Spleen (tissue), 13 donors: ENCODE measurements at regions of chr19 and their contacts with region 1.

Region 1: DNA sequence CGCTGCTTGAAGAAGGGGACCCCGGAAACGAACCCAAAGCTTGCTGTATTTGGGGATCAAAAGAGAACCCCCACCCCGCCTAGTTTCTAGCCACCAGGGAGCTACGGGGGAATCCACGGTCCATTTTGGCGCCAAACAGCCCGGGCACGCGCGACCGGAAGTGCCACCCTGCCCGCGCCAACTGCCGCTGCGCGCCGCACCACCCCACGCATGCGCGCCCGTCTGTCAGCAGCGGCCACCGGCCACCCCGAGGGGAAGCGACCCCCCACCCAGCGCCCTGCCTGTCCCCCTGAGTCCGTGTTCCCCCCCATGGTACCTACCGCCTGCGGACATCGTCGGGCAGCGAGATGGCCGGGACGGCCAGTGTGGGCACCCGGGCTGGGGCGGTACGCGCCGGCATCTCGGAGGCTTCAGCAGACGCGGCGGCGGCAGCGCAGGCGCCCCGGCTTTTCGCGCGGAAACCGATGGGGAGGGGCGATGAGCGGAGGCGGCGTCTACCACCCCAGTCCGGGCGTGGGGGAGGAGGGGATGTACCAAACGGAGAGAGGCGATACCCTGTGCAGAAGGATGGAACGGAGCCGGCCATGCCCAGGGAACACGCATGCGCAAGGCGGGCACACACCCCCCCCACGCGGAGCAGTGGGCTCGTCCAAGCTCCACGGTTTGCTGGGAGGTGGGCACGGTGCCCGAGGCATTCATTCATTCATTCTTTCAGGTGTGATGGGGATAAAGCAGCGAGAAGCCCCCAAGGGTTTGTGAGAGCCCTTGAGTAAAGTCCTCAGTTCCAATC is at the start of gene DNMT1:
- DNase-seq: peak; percentile 98
- H3K4me3 ChIP-seq: peak within 1 kb of the TSS; percentile 87 to 99 (median 94)
- H3K27ac ChIP-seq: peak within 1 kb of the TSS; percentile 79 to 92 (median 88)
- H3K4me1 ChIP-seq: peaks cover 17 to 78% (median 45%) of the 10 kb centered on the region in 6 donors
- H3K27me3 ChIP-seq: no peaks in the 10 kb centered on the region
- CTCF ChIP-seq: peak in 1 of 11 experiments; percentile 10
- POLR2A ChIP-seq: peak in 2 of 3 donors; percentile 27 to 44
- total RNA-seq, gene DNMT1: 66.9 to 131 (median 77.2) TPM

Region 2: GRCh38 chr19:10036601-10037071 is 158.1 kb before region 1 on chr19:
- intact Hi-C with region 1: no loop called
- DNase-seq: no peak
- H3K4me3 ChIP-seq: no peak overlapping the region
- H3K27ac ChIP-seq: no peak overlapping the region
- H3K4me1 ChIP-seq: no peaks in the 10 kb centered on the region
- H3K27me3 ChIP-seq: peaks cover 0 to 61% (median 4%) of the 10 kb centered on the region in 7 donors
- CTCF ChIP-seq: no peak
- POLR2A ChIP-seq: no peak

Region 3: DNA sequence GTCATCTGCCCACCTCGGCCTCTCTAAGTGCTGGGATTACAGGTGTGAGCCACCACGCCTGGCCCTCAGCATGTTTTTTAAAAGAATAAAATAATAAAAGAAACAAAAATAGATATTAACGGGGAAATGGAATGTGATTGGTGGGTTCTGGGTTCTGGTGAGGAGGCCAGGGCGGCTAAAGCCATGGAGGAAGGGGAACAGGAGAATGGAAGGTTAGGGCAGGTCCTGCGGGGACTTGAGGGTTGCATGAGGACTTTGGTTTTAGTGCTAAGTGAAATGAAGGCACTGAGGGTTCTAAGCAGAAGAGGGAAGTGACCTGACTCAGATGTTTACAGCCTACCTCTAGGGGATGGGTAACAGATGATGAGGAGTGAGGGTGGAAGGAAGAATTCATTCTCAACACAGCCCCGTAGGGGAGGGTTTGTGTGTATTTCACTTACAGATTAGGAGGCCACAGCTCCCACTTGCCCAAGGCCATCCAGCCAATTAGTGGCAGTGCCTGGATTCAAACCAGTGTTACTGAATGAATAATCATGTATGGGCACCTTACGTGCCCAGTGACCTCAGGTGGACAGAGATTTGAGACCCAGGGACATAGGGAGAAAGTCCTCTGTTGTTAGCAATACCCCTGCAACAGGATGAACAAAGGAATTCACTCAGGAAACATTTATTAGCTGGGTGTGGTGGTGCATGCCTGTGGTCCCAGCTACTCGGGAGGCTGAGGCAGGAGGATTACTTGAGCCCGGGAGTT is 50.7 kb after region 1 on chr19:
- intact Hi-C with region 1: loop called (anchors 10 kb)
- DNase-seq: no peak
- H3K4me3 ChIP-seq: no peak overlapping the region
- H3K27ac ChIP-seq: no peak overlapping the region
- H3K4me1 ChIP-seq: peaks cover 4 to 7% (median 5%) of the 10 kb centered on the region in 6 donors
- H3K27me3 ChIP-seq: no peaks in the 10 kb centered on the region
- CTCF ChIP-seq: no peak
- POLR2A ChIP-seq: no peak

Region 4: DNA sequence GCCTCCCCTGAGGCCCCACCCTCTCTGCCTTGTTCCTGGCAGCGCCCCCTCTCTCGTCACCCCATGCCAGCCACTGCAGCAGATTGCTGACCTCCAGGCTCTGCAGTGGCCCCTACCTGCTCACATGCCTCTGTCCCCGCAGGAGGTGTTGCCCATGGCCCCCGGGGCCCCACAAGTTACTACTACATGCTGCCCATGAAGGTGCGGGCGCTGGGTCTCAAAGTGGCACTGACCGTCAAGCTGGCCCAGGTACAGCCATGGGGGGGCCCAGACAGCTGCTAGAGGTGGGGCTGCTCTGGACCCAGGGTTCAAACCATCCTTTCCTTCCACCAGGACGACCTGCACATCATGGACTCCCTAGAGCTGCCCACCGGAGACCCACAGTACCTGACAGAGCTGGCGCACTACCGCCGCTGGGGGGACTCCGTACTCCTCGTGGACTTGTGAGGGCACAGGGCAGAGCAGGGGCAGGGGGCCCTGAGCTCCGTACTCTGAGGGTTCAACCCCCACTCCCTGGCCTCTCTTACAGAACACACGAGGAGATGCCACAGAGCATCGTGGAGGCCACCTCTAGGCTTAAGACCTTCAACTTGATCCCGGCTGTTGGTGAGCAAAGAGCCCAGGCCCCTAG is 63.5 kb after region 1 on chr19:
- intact Hi-C with region 1: no loop called
- DNase-seq: no peak
- H3K4me3 ChIP-seq: no peak overlapping the region
- H3K27ac ChIP-seq: no peak overlapping the region
- H3K4me1 ChIP-seq: peaks cover 0 to 36% (median 13%) of the 10 kb centered on the region in 6 donors
- H3K27me3 ChIP-seq: no peaks in the 10 kb centered on the region
- CTCF ChIP-seq: no peak
- POLR2A ChIP-seq: no peak